AG04449 (cell line): ENCODE measurements at regions of chr9 and their contacts with region 1.

Region 1: DNA sequence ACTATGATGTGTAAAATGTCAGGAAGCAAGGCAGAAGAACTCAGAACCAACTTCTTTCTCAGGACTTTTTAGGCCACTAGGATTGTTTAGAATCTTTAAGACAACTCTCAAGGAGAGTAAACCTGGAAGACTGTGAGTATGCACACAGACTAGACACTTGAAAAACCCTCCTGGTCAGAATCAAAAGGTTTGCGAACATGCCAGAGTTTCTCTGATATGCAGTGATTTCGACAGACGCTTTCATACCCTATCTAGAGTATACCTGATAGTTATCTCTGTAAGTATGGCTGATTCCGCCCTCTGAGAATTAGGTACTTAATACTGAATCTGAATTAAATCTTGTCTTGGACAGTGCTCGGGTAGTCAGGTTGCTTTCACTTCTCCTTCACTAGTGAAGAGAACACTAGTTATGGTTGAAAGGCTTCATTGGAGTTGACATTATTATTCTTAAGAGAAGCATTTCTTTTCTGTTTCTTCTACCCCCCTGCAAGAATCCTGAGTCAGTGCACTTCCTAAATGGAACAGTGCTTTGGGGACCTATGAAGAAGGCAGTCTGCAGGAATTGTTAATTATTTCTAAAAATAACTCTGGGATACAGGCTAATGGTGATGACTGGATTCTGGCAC is 158.1 kb downstream of the HACD4 start:
- DNase-seq: peak; percentile 44
- H3K4me3 ChIP-seq: peak overlapping the region; percentile 13; the same call in 1 of the 2 replicates
- CTCF ChIP-seq: no peak

Region 2: GRCh38 chr9:20884985-20885593 is 11.7 kb after region 1 on chr9:
- CTCF ChIA-PET with region 1: interaction called, 25 read pairs
- POLR2A ChIA-PET with region 1: no interaction called
- DNase-seq: no peak
- H3K4me3 ChIP-seq: no peak overlapping the region
- CTCF ChIP-seq: peak; percentile 61